SK-N-SH (cell line): ENCODE measurements at regions of chr10 and their contacts with region 1.

Region 1: DNA sequence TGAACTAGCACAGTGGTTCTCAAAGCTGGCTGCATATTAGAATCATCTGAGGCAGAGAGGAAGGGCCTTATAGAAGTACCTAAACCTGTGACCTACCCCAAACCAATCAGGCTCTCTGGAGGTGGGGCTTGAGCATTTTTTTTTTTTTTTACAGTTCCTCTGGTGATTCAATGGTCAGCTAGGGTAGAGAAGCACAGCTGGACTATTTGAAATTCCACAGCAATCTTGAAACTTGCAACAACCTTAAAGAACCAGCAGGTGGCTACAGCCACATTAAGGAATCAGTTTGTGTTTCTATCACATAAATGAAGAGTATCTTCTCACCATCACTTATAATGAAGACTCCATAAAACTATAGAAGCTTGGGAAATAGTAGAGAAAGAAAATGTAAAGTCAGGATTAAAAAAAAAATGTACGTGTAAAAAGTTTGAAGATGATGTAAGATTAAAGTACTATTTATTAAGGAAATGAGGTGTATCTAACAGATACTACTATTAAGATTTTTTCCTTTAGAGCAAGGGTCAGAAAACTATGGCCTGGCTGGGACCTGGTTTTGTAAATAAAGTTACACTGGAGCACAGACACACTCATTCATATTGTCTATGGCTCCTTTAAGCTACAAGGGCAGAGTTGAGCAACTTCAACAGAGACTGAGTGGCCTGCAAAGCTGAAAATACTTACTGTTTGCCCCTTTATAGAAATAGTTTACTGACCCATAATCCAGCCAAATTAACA is 3.8 kb downstream of the RTKN2 start:
- DNase-seq: peak; percentile 65
- H3K4me3 ChIP-seq: no peak overlapping the region
- H3K27ac ChIP-seq: peak overlapping the region; percentile 19 to 58; a peak in 3 of 4 replicates
- H3K4me1 ChIP-seq: peaks cover 16 to 36% of the 10 kb centered on the region in 2 experiments; a peak in 3 of 4 replicates
- H3K27me3 ChIP-seq: no peaks in the 10 kb centered on the region
- CTCF ChIP-seq: peak; percentile 77
- EP300 ChIP-seq: no peak
- RAD21 ChIP-seq: peak; percentile 67

Region 2: DNA sequence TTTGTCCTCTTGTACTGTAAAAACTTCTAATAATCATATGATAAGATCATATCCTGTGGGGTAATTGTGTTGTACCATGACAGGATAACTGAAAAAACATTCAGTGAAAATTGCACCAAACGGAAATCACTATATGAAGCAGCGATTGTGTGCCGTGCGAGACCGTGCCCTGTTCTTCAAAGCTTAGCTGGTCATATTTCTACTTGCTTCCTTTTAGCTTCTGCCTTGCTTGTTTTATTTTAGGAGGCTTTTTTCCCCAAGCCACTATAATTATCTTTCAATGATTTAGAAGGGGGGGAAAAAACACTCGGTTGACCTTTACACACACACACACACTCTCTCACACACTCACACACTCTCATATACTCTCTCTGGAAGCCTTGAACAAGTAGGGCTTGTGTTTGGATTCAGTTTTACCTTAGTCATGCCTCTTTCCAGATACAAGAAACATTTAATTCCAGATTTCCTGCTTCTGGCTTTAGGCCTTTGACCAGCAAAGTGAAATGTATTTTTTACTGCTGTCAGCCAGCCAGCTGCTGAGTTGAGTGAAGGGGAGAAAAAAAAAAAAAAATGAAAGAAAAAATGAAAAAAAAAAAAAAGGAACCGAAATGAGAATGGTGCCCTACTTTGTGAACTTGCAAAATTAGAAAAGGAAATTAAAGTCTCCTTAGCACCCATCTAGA is 182.0 kb before region 1 on chr10:
- CTCF ChIA-PET with region 1: no interaction called
- POLR2A ChIA-PET with region 1: no interaction called
- DNase-seq: no peak
- H3K4me3 ChIP-seq: peak overlapping the region in 1 of 2 experiments; percentile 50; a peak in 2 of 4 replicates
- H3K27ac ChIP-seq: peak overlapping the region; percentile 91 to 97
- H3K4me1 ChIP-seq: peaks cover 37 to 49% of the 10 kb centered on the region in 2 experiments
- H3K27me3 ChIP-seq: no peaks in the 10 kb centered on the region
- CTCF ChIP-seq: no peak
- EP300 ChIP-seq: peak in 1 of 2 experiments; percentile 3; a peak in 1 of 4 replicates
- RAD21 ChIP-seq: no peak

Region 3: DNA sequence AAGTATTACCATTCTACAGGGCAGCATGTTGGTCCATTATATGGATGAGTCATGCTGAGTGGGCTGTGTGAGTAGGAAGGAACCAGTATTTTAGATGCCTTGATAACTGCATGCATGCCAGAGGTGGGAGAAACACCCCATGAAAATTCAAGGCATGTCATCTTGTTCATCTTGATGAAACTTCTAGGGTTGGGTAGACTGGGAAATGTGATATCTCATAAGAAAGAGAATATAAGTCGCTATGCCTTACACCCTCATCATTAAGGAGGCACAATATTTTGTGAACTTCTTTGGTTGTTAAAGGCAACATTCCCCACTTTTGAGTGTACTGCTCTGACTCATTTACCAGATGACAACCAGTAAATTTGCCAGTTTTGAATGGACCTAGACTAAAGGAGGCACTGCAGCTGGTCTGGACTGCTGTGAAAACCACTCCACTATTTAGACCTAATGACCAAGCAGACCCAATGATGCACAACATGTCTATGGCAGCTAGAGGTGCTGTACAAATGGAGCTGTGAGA is 157.3 kb after region 1 on chr10:
- CTCF ChIA-PET with region 1: interaction called, 13 read pairs
- POLR2A ChIA-PET with region 1: no interaction called
- DNase-seq: no peak
- H3K4me3 ChIP-seq: no peak overlapping the region
- H3K27ac ChIP-seq: peak overlapping the region in 1 of 2 experiments; percentile 78; a peak in 3 of 4 replicates
- H3K4me1 ChIP-seq: peaks cover 0 to 18% of the 10 kb centered on the region in 2 experiments; a peak in 1 of 4 replicates
- H3K27me3 ChIP-seq: no peaks in the 10 kb centered on the region
- CTCF ChIP-seq: peak; percentile 42
- EP300 ChIP-seq: peak in 1 of 2 experiments; percentile 78; a peak in 2 of 4 replicates
- RAD21 ChIP-seq: no peak